H1 (cell line): ENCODE measurements at regions of chr10 and their contacts with region 1.

Region 1: GRCh38 chr10:97278491-97278989 is 13.9 kb downstream of the ARHGAP19 start:
- DNase-seq: no peak
- H3K4me3 ChIP-seq: no peak overlapping the region
- H3K27ac ChIP-seq: no peak overlapping the region
- H3K4me1 ChIP-seq: no peaks in the 10 kb centered on the region
- H3K27me3 ChIP-seq: no peaks in the 10 kb centered on the region
- CTCF ChIP-seq: peak in 1 of 3 experiments; percentile 37; a peak in 2 of 4 replicates
- EP300 ChIP-seq: no peak
- POLR2A ChIP-seq: no peak
- RAD21 ChIP-seq: peak; percentile 40 to 43

Region 2: DNA sequence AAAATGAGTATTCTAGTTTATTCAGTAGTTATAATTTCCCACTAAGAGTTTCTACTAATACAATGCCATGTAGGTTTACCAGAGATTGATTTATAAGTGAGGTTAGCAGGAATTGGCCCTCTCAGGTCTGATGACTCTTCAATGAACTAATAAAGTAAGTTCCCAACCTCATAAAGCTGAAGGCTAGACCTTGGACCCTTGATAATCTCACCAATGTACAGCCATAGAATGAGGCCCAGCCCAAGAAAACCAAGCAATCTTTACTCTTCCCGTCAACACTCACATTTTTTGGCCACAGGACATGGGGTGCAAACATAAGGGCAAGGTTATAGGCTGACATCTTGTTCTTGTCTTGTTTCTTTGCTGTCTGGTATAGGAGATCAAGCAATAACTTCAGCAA is 19.4 kb before region 1 on chr10:
- CTCF ChIA-PET with region 1: interaction called, 30 read pairs
- POLR2A ChIA-PET with region 1: no interaction called
- DNase-seq: no peak
- H3K4me3 ChIP-seq: no peak overlapping the region
- H3K27ac ChIP-seq: no peak overlapping the region
- H3K4me1 ChIP-seq: no peaks in the 10 kb centered on the region
- H3K27me3 ChIP-seq: no peaks in the 10 kb centered on the region
- CTCF ChIP-seq: no peak
- EP300 ChIP-seq: no peak
- POLR2A ChIP-seq: no peak
- RAD21 ChIP-seq: no peak

Region 3: GRCh38 chr10:97292097-97292862 is 13.7 kb after region 1 on chr10 and contains the start of gene ARHGAP19:
- CTCF ChIA-PET with region 1: interaction called, 17 read pairs
- POLR2A ChIA-PET with region 1: interaction called, 16 read pairs
- DNase-seq: peak; percentile 92 to 93
- H3K4me3 ChIP-seq: peak within 1 kb of the TSS; percentile 64 to 89 (median 84)
- H3K27ac ChIP-seq: peak within 1 kb of the TSS; percentile 93
- H3K4me1 ChIP-seq: peaks cover 0 to 4% (median under 1%) of the 10 kb centered on the region in 4 experiments; a peak in 3 of 7 replicates
- H3K27me3 ChIP-seq: no peaks in the 10 kb centered on the region
- CTCF ChIP-seq: 0 out of 4 replicates have a peak, but pooled peaks of 1 of the 3 experiments have one; percentile 6
- EP300 ChIP-seq: no peak
- POLR2A ChIP-seq: peak; percentile 81 to 95
- RAD21 ChIP-seq: no peak; a peak in 1 of 4 replicates
- total RNA-seq, gene ARHGAP19: 32.1 and 33.4 TPM in 2 replicates

Region 4: DNA sequence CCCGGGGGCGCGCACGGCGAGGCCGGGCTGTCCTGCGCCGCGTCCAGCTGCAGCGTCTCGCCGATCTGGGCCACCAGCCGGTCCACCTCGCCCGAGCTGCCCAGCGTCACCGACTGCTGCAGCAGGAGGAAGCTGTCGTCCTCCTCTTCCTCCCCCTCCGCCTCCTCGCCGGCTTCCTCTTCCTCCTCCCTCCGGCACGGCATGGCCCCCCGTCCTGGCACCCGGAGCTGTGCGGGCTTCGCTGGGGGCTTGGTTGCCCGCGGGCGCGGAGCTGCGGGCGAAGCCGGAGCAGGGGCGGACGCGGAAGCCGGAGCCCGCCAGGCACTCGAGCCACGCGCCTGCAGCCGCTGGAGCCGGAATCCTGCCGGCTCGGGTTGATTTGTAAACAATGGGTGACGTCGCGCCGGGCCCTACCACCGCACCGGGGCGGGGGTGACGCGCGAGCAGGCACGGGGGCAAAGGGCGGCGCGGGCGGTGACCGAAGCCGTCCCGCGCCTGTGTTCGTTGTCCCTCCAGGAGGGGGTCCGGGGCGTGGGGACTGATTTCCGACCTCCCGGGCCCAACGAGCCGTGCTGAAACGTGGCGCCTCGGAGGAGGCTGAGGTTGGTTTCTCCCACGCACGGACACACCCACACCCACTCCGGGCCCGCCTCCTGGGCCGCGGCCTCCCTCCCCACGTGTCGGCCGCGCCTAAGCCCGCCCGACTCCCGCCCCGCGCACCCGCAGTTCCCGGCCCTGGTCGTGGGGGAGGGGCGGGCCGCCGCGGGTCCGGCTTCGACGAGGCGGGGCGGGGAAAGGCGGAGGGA is 56.0 kb after region 1 on chr10 and contains the start of gene FRAT2:
- CTCF ChIA-PET with region 1: interaction called, 11 read pairs
- POLR2A ChIA-PET with region 1: interaction called, 8 read pairs
- DNase-seq: peak in 1 of 2 experiments; percentile 95
- H3K4me3 ChIP-seq: peak within 1 kb of the TSS; percentile 84 to 92 (median 91)
- H3K27ac ChIP-seq: peak within 1 kb of the TSS; percentile 99
- H3K4me1 ChIP-seq: peaks cover 8 to 22% (median 12%) of the 10 kb centered on the region in 4 experiments
- H3K27me3 ChIP-seq: no peaks in the 10 kb centered on the region
- CTCF ChIP-seq: no peak
- EP300 ChIP-seq: peak in 1 of 2 experiments; percentile 93; a peak in 2 of 3 replicates
- POLR2A ChIP-seq: peak; percentile 69 to 84
- RAD21 ChIP-seq: no peak
- total RNA-seq, gene FRAT2: 83.0 and 87.7 TPM in 2 replicates

Region 5: DNA sequence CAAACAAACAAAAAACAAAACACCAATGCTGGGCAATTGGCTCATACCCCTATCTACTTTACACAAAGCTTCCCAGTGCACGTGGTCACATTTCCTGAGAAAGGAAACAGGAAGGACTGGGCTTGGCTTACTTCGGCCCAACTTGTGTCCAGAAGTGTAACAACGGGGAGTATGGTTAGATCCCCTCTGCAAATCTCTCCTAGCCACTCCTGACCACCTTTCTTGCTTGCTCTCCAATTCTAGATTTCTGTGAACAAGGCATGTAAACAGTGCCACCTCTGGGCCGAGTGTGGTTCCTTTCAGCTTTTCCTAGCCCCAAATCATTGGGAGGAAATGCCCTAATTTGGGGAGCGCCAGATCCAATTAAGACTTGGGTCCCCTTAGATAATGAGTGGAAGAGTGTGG is 77.0 kb after region 1 on chr10:
- CTCF ChIA-PET with region 1: interaction called, 45 read pairs
- POLR2A ChIA-PET with region 1: interaction called, 7 read pairs
- DNase-seq: peak in 1 of 2 experiments; percentile 58
- H3K4me3 ChIP-seq: no peak overlapping the region
- H3K27ac ChIP-seq: no peak overlapping the region
- H3K4me1 ChIP-seq: peaks cover 0 to 3% (median 1%) of the 10 kb centered on the region in 4 experiments; a peak in 3 of 7 replicates
- H3K27me3 ChIP-seq: no peaks in the 10 kb centered on the region
- CTCF ChIP-seq: peak; percentile 20 to 81 (median 80)
- EP300 ChIP-seq: no peak
- POLR2A ChIP-seq: no peak
- RAD21 ChIP-seq: peak; percentile 87 to 89

Region 6: DNA sequence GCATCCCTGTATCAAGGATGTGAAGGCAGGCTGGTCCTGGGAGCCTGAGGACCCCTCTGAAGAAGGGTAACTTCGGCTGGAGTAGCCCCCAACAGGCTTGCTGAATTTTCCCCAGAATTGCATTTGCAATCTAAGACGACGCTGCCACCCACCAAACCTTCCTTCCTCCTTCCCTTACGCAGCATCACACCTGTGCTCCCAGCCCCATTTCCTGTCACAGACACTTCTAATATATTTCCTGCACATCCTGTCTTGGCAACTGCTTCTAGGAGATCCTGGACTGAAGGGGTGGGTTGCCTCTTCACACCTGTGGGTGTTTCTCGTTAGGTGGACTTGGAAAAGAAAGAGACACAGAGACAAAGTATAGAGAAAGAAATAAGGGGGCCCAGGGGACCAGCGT is 138.0 kb after region 1 on chr10:
- CTCF ChIA-PET with region 1: no interaction called
- POLR2A ChIA-PET with region 1: no interaction called
- DNase-seq: no peak
- H3K4me3 ChIP-seq: no peak overlapping the region
- H3K27ac ChIP-seq: no peak overlapping the region
- H3K4me1 ChIP-seq: peaks cover 0 to 7% (median 1%) of the 10 kb centered on the region in 4 experiments; a peak in 2 of 7 replicates
- H3K27me3 ChIP-seq: no peaks in the 10 kb centered on the region
- CTCF ChIP-seq: no peak
- EP300 ChIP-seq: no peak
- POLR2A ChIP-seq: no peak
- RAD21 ChIP-seq: no peak